H1 (cell line): ENCODE measurements at regions of chr12 and their contacts with region 1.

Region 1: DNA sequence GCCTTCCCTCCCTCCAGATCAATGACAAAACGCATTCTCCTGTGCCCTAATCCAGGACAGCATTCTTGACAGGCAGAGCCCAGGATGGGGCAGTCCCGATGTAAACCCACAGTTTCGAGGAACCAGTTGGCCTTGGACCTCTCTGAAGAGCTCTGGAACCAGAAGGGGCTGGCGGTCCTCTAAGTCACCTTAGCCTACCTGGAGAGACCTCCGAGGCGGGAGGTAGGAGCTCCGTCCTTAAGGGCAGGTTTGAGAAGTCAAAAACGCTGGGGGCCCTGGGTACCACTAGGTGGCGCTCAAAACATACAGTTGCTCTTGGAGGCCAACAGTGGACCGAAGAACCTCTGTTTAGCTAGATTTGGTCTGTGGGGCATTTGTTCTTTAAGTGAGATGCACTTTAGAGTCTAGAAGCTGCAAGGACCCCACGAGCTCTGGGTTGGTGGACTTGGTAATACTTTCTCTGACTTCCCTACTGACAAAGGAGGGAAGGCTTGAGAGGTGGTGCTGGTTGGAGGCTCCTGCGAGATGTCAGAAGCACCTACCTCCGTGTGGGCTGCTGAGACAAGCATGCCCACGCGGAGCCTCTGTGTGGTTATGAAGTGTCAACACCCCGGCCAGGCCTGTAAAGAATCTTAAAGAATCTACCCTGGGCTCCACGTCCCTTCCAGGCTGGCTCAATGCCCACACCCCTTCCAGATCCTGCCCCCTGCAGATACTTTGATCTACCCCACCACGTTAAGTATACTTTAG is 74.8 kb upstream of the CHST11 start:
- DNase-seq: peak; percentile 71 to 93
- H3K4me3 ChIP-seq: 0 out of 8 replicates have a peak overlapping the region, but pooled peaks of 1 of the 4 experiments have one; percentile 28
- H3K27ac ChIP-seq: no peak overlapping the region
- H3K4me1 ChIP-seq: peaks cover 0 to 4% (median 3%) of the 10 kb centered on the region in 4 experiments; a peak in 4 of 7 replicates
- H3K27me3 ChIP-seq: no peaks in the 10 kb centered on the region
- CTCF ChIP-seq: peak; percentile 68 to 92 (median 92)
- EP300 ChIP-seq: peak in 1 of 2 experiments; percentile 18; a peak in 1 of 3 replicates
- POLR2A ChIP-seq: no peak
- RAD21 ChIP-seq: peak; percentile 98 to 99

Region 2: GRCh38 chr12:104294845-104295688 is 86.8 kb before region 1 on chr12:
- CTCF ChIA-PET with region 1: no interaction called
- POLR2A ChIA-PET with region 1: no interaction called
- DNase-seq: no peak
- H3K4me3 ChIP-seq: no peak overlapping the region
- H3K27ac ChIP-seq: no peak overlapping the region
- H3K4me1 ChIP-seq: peaks cover 0 to 5% (median 1%) of the 10 kb centered on the region in 4 experiments; a peak in 4 of 7 replicates
- H3K27me3 ChIP-seq: no peaks in the 10 kb centered on the region
- CTCF ChIP-seq: no peak
- EP300 ChIP-seq: no peak
- POLR2A ChIP-seq: no peak
- RAD21 ChIP-seq: no peak

Region 3: DNA sequence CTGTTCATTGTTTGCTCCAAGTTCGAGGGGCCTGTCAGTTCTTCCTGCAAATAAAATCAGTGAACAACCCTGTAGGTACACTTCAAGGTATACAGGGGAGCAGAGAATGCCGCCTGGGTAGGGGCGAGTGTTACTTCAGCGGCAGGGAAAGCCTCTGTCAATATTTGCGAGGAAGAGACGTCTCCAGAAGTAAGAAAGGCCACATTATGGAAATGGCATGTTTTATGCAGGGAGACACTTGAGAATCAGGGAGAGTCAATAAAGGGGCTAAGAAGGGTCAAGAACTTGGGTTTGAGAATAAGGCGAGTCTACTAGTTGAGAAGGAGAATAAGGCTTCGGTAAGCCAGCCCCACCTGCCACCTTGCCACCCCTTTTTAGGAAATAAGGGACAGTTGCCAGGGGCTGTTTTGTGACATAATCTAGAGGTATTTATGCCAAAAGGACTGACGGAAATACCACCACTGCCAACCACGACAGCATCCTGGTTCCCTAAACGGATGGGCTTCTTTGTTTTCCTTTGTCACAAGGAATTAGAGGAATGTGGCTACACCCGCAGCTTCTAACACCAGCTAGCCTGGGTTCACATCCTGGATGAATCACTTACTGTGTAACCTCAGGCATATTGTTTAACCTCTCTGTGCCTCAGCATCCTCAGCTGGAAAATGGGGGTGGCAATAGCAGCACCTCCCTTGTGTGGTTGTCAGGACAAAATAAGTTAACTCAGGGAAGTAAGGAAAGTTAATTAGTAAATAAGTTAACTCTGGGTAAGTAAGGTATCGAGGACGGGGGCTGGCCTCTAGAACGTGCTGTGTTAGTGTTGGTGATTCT is 10.6 kb before region 1 on chr12:
- CTCF ChIA-PET with region 1: interaction called, 17 read pairs
- POLR2A ChIA-PET with region 1: interaction called, 3 read pairs
- DNase-seq: peak in 1 of 2 experiments; percentile 54
- H3K4me3 ChIP-seq: no peak overlapping the region
- H3K27ac ChIP-seq: peak overlapping the region; percentile 60; the same call in 1 of the 2 replicates
- H3K4me1 ChIP-seq: peaks cover 12 to 25% (median 19%) of the 10 kb centered on the region in 4 experiments; a peak in 6 of 7 replicates
- H3K27me3 ChIP-seq: no peaks in the 10 kb centered on the region
- CTCF ChIP-seq: no peak
- EP300 ChIP-seq: peak in 1 of 2 experiments; percentile 13; a peak in 1 of 3 replicates
- POLR2A ChIP-seq: no peak
- RAD21 ChIP-seq: no peak

Region 4: DNA sequence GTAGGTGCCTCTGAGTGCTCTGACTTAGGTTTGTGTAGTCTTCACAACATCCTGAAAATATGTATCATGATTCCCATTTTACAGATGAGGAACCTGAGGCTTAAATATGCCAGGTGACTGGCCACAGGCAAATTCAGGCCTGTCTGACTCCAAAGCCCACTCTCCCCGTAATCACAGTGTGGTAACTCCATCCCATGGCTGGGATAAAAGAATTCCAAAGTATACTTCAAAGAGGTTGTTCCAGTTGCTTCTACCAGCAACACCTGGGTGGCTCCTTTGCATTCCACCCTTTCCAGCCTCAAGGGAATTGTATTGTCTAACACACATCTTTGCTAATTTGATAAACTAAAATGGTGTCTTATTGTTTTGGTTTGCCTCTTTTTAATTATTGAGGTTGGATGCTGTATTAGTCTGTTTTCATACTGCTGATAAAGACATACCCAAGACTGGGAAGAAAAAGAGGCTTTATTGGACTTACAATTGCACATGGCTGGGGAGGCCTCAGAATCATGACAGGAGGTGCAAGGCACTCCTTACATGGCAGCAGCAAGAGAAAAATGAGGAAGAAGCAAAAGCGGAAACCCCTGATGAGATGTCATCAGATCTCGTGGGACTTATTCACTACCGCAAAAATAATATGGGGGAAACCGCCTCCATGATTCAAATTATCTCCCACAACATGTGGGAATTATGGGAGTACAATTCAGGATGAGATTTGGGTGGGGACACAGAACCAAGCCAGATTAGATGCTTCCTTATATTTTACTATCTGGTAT is 64.9 kb after region 1 on chr12:
- CTCF ChIA-PET with region 1: interaction called, 13 read pairs
- POLR2A ChIA-PET with region 1: interaction called, 3 read pairs
- DNase-seq: no peak
- H3K4me3 ChIP-seq: no peak overlapping the region
- H3K27ac ChIP-seq: no peak overlapping the region
- H3K4me1 ChIP-seq: peaks cover 0 to under 1% (median under 1%) of the 10 kb centered on the region in 4 experiments; a peak in 1 of 7 replicates
- H3K27me3 ChIP-seq: no peaks in the 10 kb centered on the region
- CTCF ChIP-seq: no peak
- EP300 ChIP-seq: no peak
- POLR2A ChIP-seq: no peak
- RAD21 ChIP-seq: no peak

Region 5: GRCh38 chr12:104473374-104473983 is 91.6 kb after region 1 on chr12:
- CTCF ChIA-PET with region 1: interaction called, 11 read pairs
- POLR2A ChIA-PET with region 1: no interaction called
- DNase-seq: no peak
- H3K4me3 ChIP-seq: no peak overlapping the region
- H3K27ac ChIP-seq: no peak overlapping the region
- H3K4me1 ChIP-seq: peaks cover 0 to 4% (median 0%) of the 10 kb centered on the region in 4 experiments; a peak in 3 of 7 replicates
- H3K27me3 ChIP-seq: no peaks in the 10 kb centered on the region
- CTCF ChIP-seq: no peak
- EP300 ChIP-seq: no peak
- POLR2A ChIP-seq: no peak
- RAD21 ChIP-seq: no peak

Region 6: DNA sequence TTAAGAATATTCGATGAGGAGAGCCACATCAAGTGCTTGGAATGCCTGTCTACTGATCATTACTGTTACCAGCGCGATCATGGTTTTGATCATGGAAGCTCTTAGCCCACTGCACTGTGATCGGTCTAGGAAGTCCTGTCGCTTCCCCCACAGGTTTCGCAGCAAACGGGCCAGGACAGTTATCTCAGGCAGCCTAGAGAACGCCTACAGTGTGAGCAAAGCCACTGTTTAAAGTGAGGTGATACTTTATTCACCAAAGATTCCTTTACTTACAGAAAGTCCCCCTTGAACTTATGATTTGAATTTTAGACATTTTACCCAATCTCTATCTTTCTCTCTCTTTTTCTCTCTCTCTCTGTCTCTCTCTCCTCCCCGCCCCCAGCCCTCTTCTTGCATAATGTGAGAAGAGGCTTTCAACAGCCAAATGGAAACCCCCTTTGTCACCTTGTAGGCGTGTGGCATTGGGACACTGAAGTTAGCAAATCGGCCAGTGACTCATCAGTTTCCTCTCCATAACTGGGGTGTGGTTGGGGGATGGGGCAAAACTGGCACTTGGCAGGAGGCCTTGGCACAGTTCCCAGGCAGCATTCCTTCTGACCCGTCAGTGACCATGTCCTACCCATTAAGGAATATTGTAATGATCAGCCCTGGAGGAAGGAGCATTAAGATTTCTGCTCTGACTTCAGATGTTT is 289.6 kb after region 1 on chr12:
- CTCF ChIA-PET with region 1: interaction called, 11 read pairs
- POLR2A ChIA-PET with region 1: interaction called, 3 read pairs
- DNase-seq: no peak
- H3K4me3 ChIP-seq: peak overlapping the region in 1 of 4 experiments; percentile 7; a peak in 1 of 8 replicates
- H3K27ac ChIP-seq: no peak overlapping the region
- H3K4me1 ChIP-seq: peaks cover 0 to 15% (median 7%) of the 10 kb centered on the region in 4 experiments; a peak in 6 of 7 replicates
- H3K27me3 ChIP-seq: no peaks in the 10 kb centered on the region
- CTCF ChIP-seq: no peak
- EP300 ChIP-seq: no peak
- POLR2A ChIP-seq: no peak
- RAD21 ChIP-seq: no peak

Region 7: DNA sequence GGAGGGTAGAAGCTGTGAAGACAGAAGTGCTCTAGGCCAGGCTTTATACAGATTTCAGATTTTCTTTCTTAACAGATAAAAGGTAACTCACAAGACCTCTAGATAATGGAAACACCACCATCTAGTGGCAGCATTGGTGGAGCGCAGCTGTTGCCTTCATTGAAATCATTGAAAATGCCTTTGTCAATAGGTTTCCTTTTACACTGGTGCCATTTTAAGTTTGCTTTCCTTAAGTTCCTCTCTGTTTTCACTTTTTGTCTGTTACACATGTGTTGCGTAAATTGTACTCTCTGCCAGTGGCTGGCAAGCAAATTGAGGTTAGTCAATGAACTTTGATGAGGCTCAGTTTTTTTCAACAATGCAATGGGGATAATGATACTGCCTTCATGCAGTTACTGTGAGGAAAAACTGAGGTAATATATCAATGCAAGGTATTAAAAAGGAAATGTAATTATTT is 671.2 kb after region 1 on chr12:
- CTCF ChIA-PET with region 1: interaction called, 13 read pairs
- POLR2A ChIA-PET with region 1: no interaction called
- DNase-seq: peak; percentile 44 to 86
- H3K4me3 ChIP-seq: no peak overlapping the region
- H3K27ac ChIP-seq: no peak overlapping the region
- H3K4me1 ChIP-seq: no peaks in the 10 kb centered on the region
- H3K27me3 ChIP-seq: no peaks in the 10 kb centered on the region
- CTCF ChIP-seq: peak in 2 of 3 experiments; percentile 80 to 93; a peak in 3 of 4 replicates
- EP300 ChIP-seq: no peak
- POLR2A ChIP-seq: no peak
- RAD21 ChIP-seq: peak; percentile 93 to 95